KBM-7 (cell line): ENCODE measurements at regions of chr14 and their contacts with region 1.

Region 1: DNA sequence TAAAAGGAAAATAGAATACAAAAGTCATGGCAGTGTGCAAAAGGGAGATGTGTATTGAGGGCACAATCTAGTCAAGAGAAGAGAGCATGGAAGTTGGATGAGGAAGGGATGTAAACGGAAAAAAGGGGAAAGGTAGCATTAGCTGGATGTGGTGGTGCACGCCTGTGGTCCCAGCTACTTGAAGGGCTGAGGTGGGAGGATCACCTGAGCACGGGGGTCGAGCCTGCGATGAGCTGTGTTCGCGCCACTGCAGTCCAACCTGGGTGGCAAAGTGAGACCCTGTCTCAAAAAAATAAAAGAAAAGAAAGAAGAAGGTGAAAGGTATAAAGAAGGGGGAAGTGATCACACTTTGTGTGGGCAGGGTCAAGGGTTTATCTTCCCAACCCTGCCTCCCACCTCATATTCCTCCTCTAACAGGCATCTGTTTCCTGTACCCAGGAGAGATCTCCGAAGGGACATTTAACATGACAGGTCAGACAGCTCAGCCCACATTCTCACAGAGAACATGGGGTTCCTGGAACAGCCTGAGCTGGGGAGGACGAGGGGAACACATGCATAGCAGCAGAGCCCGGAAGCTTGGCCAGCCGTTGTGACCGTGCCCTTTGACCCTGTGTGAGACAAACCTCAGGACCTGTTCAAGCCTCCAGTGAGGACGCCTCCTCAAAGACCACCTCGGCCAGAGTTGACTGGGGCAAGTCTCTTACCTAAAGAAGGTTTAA is 8.9 kb downstream of the RNASE11 start:
- DNase-seq: peak; percentile 92

Region 2: GRCh38 chr14:20278414-20278813 is 300.5 kb before region 1 on chr14:
- in situ Hi-C with region 1: no loop called
- DNase-seq: peak; percentile 56

Region 3: GRCh38 chr14:20477211-20477876 is 101.6 kb before region 1 on chr14:
- in situ Hi-C with region 1: loop called (anchors 25 kb)
- DNase-seq: peak; percentile 93

Region 4: GRCh38 chr14:20697273-20698017 is 118.5 kb after region 1 on chr14:
- in situ Hi-C with region 1: no loop called
- DNase-seq: peak; percentile 79

Region 5: DNA sequence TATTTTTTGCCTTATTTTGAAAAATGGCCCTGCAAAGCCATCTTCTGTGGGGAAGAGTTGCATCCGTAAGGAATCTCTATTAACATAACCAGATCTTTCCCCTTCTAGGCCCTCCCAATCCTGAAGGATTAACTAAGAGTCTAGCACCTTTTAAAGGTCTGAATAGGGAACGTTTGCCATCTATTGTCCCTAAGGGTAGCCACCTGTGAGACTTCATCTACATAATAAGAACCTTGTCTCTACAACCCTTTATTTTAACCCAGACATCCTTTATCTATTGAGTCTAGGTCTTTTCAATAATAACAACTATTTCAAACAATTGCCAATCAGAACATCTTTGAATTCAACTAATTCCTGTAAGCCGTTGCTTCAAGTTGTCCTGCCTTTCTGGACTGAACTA is 193.7 kb after region 1 on chr14:
- in situ Hi-C with region 1: no loop called
- DNase-seq: no peak